Common myeloid progenitor, CD34-positive (primary cell): ENCODE measurements at regions of chr2 and their contacts with region 1.

Region 1: DNA sequence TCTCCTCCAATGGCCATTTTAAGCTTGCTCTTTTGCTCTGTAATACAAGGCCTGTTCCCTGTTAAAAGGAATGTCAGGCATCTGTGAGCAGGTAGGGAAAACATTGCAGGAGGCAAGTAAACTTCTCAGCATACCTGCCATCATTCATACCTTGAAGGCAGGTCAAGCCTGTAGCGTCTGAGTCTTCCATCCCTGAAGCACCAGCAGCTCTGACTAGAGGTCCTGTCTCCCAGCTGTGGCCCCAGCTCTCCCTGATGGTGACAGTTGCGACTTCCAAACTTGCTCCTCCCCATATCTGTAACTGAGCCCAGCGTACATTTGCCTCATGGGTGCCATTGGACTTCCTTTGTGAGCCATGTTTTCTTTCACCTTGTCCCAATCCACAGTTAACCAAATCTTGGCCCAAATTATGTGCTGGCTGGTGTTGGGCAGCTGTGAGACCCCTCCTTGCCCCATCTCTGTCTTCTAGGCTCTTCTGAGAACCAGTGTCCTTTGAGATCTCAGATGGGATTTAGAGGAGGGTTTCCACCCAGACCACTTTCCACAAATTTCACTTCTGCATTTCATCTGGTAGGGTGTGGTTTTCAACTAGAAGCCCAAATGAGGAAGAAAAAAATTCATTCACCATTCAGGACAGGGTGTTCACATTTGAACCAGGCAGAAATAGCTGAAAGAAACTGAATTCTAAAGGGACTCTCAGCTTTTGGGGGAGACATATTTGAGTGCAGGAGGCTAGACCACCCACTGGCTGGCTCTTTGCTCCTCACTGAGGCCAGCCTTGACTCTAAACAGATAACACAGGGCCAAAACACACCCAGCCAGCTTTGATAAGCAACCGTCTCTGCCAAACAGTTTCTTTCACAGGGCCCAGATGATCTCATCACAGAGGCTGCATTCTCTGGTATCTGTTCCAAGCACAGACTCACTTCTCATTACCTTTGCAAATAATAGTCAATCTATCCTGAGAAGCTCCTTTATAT is 66.4 kb upstream of the MSH2 start:
- DNase-seq: peak; percentile 47 to 81 (median 80)
- H3K4me3 ChIP-seq: no peak overlapping the region
- H3K27ac ChIP-seq: peak overlapping the region in 1 of 2 experiments; percentile 59
- H3K4me1 ChIP-seq: peaks cover 0 to 16% (median 11%) of the 10 kb centered on the region in 4 experiments
- H3K27me3 ChIP-seq: no peaks in the 10 kb centered on the region

Region 2: GRCh38 chr2:47043142-47043890 is 293.2 kb before region 1 on chr2:
- CTCF ChIA-PET with region 1: no interaction called
- POLR2A ChIA-PET with region 1: no interaction called
- DNase-seq: no peak
- H3K4me3 ChIP-seq: no peak overlapping the region
- H3K27ac ChIP-seq: no peak overlapping the region
- H3K4me1 ChIP-seq: peaks cover 0 to 14% (median 12%) of the 10 kb centered on the region in 4 experiments
- H3K27me3 ChIP-seq: no peaks in the 10 kb centered on the region

Region 3: GRCh38 chr2:47173986-47174732 is 162.4 kb before region 1 on chr2:
- CTCF ChIA-PET with region 1: no interaction called
- POLR2A ChIA-PET with region 1: no interaction called
- DNase-seq: peak in 1 of 3 donors; percentile 10
- H3K4me3 ChIP-seq: peak overlapping the region in 6 of 7 experiments; percentile 89 to 99 (median 92)
- H3K27ac ChIP-seq: peak overlapping the region; percentile 79 to 91
- H3K4me1 ChIP-seq: peaks cover 29 to 64% (median 45%) of the 10 kb centered on the region in 4 experiments
- H3K27me3 ChIP-seq: no peaks in the 10 kb centered on the region

Region 4: DNA sequence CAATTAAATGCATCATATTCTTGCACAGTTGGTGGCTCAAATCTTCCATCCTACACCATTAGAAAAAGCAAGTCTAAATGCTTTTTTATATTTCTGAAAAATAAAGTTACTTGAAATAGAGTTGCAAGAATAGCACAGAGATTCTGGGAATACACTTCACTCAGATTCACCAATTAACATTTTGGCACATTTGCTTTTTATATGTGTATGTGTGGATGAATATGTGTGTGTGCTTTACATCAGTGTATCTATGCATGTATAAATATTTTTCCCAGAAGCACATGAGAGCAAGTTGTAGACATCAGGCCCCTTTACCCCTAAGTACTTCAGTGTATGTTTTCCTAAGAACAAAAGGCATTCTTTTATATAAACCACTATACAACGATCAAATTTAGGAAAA is 38.8 kb after region 1 on chr2:
- CTCF ChIA-PET with region 1: interaction called, 13 read pairs
- POLR2A ChIA-PET with region 1: no interaction called
- DNase-seq: no peak
- H3K4me3 ChIP-seq: no peak overlapping the region
- H3K27ac ChIP-seq: no peak overlapping the region
- H3K4me1 ChIP-seq: no peaks in the 10 kb centered on the region
- H3K27me3 ChIP-seq: peaks cover 0 to 5% (median 2%) of the 10 kb centered on the region in 5 experiments

Region 5: GRCh38 chr2:47386551-47386950 is 50.0 kb after region 1 on chr2:
- CTCF ChIA-PET with region 1: interaction called, 53 read pairs
- POLR2A ChIA-PET with region 1: interaction called, 6 read pairs
- DNase-seq: no peak
- H3K4me3 ChIP-seq: no peak overlapping the region
- H3K27ac ChIP-seq: no peak overlapping the region
- H3K4me1 ChIP-seq: peaks cover 0 to 4% (median 0%) of the 10 kb centered on the region in 4 experiments
- H3K27me3 ChIP-seq: no peaks in the 10 kb centered on the region

Region 6: DNA sequence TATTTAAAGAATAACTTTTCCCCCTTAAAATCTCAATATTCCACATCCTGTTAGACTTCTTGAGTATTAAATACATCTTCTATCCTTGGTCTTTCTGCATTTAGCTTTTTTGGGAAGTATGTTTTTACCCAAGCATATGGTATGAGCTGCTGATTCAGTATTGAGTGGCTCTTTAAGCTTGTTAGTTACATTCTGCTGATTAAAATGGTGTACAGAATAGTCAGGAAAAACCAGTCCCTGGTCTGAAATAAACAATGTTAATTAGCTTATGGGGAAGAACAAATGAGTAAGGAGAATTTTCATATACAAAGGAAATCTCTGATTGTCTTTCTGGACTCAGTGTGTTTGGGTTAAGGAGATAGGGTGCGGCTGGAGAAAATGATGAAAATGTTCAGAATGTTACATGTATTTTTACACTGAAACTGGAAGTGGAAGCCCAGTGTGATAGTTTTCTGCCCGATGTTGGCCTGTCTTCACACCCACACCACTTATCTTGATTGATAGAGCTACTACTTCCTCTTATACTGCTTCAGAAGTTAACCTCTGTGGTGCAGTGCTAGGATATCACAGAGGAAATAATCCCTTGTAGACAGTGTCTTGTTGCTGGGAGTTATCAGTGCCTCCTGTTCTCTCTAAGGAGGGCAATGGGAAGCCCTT is 150.4 kb after region 1 on chr2:
- CTCF ChIA-PET with region 1: no interaction called
- POLR2A ChIA-PET with region 1: no interaction called
- DNase-seq: peak; percentile 32 to 86 (median 70)
- H3K4me3 ChIP-seq: no peak overlapping the region
- H3K27ac ChIP-seq: no peak overlapping the region
- H3K4me1 ChIP-seq: peaks cover 0 to 12% (median 6%) of the 10 kb centered on the region in 4 experiments
- H3K27me3 ChIP-seq: no peaks in the 10 kb centered on the region

Region 7: GRCh38 chr2:47737191-47737975 is 400.8 kb after region 1 on chr2:
- CTCF ChIA-PET with region 1: no interaction called
- POLR2A ChIA-PET with region 1: no interaction called
- DNase-seq: no peak
- H3K4me3 ChIP-seq: no peak overlapping the region
- H3K27ac ChIP-seq: no peak overlapping the region
- H3K4me1 ChIP-seq: no peaks in the 10 kb centered on the region
- H3K27me3 ChIP-seq: peaks cover 0 to 3% (median 0%) of the 10 kb centered on the region in 5 experiments

Region 8: DNA sequence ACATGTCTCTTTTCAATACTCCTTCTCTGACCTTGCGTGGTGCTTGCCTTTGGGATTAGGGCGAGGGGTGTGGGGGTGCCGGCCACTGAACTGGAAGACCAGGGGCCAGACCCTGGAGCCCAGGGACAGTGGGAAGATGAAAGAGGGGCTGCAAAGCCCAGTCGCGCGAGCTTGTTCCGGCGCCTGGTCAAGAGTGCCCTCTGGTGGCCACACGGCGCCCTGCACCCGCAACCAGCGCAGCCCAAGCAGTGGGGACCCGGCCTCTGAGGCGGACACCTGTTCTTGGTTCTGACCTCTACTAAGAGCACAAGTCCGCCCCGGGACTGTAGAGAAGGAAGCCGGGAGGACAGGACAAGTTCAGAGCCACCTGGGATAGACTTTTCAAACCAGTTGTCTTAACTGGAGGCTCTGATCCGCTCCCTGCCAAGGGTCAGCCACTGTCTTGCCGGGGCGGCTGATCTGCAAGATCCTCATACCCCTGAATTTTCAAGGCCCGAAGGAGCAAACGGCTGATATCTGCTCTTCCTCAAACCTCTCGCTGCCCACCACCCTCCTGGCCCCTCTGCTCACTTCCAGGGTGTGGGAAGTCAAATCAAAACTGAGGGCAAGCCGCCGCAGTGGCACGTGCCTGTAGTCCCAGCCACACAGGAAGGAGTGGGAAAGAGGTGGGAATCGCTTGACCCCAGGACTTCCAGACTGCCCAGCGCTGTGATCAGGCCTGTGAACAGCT is 431.5 kb after region 1 on chr2:
- CTCF ChIA-PET with region 1: interaction called, 32 read pairs
- POLR2A ChIA-PET with region 1: no interaction called
- DNase-seq: peak; percentile 53 to 62 (median 57)
- H3K4me3 ChIP-seq: peak overlapping the region in 1 of 7 experiments; percentile 20
- H3K27ac ChIP-seq: no peak overlapping the region
- H3K4me1 ChIP-seq: no peaks in the 10 kb centered on the region
- H3K27me3 ChIP-seq: no peaks in the 10 kb centered on the region